ENCODE measurements at regions of chr3 and their contacts with region 1.

Region 1: DNA sequence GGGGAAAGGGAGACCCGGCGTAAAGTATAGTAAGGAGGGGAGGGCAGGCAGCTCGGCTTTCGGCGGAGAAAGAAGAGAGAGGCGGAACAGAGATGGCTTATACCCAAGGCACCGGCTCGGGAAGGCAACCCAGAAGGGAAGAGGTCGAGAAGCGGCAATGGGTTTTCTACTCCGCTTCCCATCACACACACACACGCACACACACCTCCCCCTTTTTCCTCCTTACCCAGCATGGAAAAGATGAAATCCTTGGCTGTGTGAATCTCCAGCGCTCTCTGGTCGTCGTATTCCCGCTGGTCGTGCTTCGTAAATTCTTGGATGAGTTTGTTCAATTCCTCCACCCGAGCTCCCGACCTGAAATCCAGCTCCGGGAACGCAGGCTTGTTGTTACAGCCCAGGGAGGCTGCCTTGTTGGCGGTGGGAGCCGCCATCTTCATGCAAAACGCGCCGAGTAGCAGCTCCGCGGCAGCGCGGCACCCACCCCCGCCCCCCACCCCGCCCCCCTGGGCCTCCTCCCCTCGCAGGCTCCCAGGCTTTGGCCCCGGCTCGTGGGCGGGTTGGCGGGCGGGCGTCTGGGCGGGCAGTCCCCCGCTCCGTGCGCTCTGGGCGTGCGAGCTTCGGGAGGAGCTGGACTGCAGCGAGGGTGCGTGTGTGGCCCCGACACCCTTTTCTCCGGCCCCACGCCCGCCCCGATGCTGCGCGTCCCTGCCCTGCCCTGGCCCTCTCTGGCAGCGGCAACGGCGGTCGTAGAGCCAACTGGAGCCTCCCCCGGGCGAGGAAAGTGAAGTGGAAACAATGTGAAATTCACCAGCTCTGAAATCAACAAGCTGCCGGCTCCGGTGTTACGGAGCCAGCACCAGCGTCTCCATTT is at the start of gene MB21D2:
- DNase-seq: peak; percentile 83
- CTCF ChIP-seq: no peak

Region 2: GRCh38 chr3:192816351-192816750 is 101.3 kb before region 1 on chr3:
- CTCF ChIA-PET with region 1: interaction called, 39 read pairs
- POLR2A ChIA-PET with region 1: interaction called, 3 read pairs
- DNase-seq: no peak
- CTCF ChIP-seq: peak; percentile 38

Region 3: GRCh38 chr3:192879336-192880106 is 38.1 kb before region 1 on chr3:
- CTCF ChIA-PET with region 1: interaction called, 10 read pairs
- POLR2A ChIA-PET with region 1: no interaction called
- DNase-seq: no peak
- CTCF ChIP-seq: no peak

Region 4: GRCh38 chr3:192892981-192893700 is 24.5 kb before region 1 on chr3:
- CTCF ChIA-PET with region 1: interaction called, 95 read pairs
- POLR2A ChIA-PET with region 1: interaction called, 5 read pairs
- DNase-seq: peak; percentile 75
- CTCF ChIP-seq: no peak

Region 5: GRCh38 chr3:192906949-192907348 is 10.7 kb before region 1 on chr3:
- CTCF ChIA-PET with region 1: interaction called, 11 read pairs
- POLR2A ChIA-PET with region 1: interaction called, 9 read pairs
- DNase-seq: no peak
- CTCF ChIP-seq: no peak

Region 6: DNA sequence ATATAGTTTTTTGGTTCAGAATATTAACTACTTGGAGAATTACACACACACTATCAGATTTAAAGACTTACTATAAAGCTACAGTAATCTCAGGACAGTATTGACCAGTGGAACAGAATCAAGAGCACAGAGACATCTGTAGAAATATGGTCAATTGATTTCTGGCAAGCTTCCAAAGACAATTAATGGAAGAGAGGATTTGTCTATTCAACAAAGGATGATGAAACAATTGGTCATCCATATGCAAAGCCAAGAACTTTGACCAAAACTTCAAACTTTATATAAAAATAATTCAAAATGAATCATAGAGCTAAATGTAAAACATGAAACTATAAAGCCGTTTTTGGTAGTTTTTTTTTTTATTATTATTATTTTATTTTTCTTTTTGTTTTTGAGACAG is 29.8 kb after region 1 on chr3:
- CTCF ChIA-PET with region 1: no interaction called
- POLR2A ChIA-PET with region 1: no interaction called
- DNase-seq: no peak
- CTCF ChIP-seq: no peak

Region 7: DNA sequence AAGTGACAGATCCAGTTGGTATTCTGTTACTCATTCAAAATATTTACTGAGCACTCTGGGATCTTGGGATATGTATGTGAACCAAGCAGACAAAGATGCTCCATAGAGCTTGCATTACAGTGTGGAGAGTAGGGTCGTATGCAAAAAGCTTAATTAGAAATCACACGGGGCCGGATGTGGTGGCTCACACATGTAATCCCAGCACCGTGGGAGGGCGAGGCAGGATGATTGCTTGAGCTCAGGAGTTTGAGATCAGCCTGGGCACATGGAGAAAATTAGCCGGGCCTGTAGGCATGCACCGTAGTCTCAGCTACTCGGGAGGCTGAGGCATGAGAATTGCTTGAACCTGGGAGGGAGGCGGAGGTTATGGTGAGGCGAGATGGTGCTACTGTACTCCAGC is 68.7 kb after region 1 on chr3:
- CTCF ChIA-PET with region 1: no interaction called
- POLR2A ChIA-PET with region 1: no interaction called
- DNase-seq: no peak
- CTCF ChIP-seq: no peak

Region 8: DNA sequence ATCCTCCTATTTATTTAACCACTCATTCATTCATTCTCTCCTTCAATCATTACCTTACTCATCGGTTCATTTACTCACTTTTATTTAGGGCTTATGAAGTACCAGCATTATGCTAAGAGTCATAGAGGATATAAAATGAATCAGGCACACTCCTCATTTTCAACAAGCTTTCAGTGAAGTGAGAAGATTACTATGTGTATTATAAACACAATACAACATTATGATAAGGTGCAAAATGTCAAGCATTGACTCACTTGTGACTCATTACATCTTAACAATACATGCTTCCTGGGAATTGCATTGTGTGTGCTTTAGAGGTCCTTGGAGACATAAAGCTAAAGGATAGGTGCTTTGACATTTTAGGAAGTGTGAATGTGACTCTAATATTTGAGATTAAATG is 383.8 kb after region 1 on chr3:
- CTCF ChIA-PET with region 1: no interaction called
- POLR2A ChIA-PET with region 1: no interaction called
- DNase-seq: no peak
- CTCF ChIP-seq: no peak